ENCODE measurements at regions of chr3 and their contacts with region 1.

Region 1: GRCh38 chr3:66822186-66823008 is 175.7 kb upstream of the KBTBD8 start:
- DNase-seq: peak; percentile 42
- H3K4me3 ChIP-seq: no peak overlapping the region
- H3K27ac ChIP-seq: no peak overlapping the region
- H3K27me3 ChIP-seq: peaks cover 2% of the 10 kb centered on the region
- CTCF ChIP-seq: peak; percentile 84

Region 2: DNA sequence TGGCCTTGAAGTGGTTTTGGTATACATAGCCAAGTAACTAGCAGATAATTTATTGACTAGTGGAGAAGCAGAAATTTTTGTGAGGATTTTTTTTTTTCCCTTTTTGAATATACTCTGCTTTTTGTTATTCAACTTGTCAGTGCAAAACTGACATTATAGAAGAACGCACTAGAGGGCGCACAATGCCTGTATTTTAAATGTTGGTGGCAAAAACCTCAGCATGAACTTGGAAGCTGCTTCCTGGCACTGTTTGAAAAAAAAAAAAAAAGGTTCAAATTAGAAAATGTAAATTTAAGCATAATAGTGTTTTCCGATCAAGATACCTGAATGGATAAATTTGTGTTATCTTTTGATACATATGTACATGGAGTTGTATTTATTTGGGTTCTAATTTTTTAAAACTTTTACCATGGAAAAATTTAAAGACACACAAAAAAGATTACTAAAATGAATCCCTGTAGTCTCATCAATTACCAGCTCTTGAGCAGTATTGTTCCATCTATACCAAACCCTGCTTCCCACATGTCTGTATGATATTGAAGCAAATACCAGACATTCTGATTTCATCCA is 545.6 kb before region 1 on chr3:
- CTCF ChIA-PET with region 1: interaction called, 46 read pairs
- POLR2A ChIA-PET with region 1: no interaction called
- DNase-seq: peak; percentile 65
- H3K4me3 ChIP-seq: no peak overlapping the region
- H3K27ac ChIP-seq: no peak overlapping the region
- H3K27me3 ChIP-seq: no peaks in the 10 kb centered on the region
- CTCF ChIP-seq: peak; percentile 66

Region 3: GRCh38 chr3:66490214-66490613 is 332.2 kb before region 1 on chr3:
- CTCF ChIA-PET with region 1: interaction called, 19 read pairs
- POLR2A ChIA-PET with region 1: no interaction called
- DNase-seq: peak; percentile 76
- H3K4me3 ChIP-seq: peak overlapping the region; percentile 35
- H3K27ac ChIP-seq: peak overlapping the region; percentile 58
- H3K27me3 ChIP-seq: no peaks in the 10 kb centered on the region
- CTCF ChIP-seq: no peak

Region 4: DNA sequence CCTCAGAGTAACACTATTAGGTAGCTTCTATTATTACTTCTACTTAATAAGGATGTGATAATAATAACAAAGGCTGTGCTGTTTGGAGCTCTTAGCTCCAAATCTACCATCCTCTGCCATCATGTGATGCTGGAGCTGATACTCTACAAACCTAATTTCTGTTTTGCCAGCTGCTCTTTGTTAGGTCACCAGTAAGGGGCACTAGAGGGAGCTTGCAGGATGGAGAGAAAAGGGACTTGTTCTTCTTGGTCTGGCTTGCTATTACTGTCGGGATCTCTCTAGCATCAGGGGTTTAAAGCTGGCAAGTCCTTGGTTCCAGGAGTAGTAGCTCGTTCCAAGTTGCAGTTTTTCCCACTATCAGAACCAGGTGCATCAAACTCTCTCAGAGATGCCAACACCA is 19.2 kb before region 1 on chr3:
- CTCF ChIA-PET with region 1: interaction called, 17 read pairs
- POLR2A ChIA-PET with region 1: no interaction called
- DNase-seq: no peak
- H3K4me3 ChIP-seq: no peak overlapping the region
- H3K27ac ChIP-seq: no peak overlapping the region
- H3K27me3 ChIP-seq: no peaks in the 10 kb centered on the region
- CTCF ChIP-seq: peak; percentile 43

Region 5: GRCh38 chr3:67737906-67738865 is 915.8 kb after region 1 on chr3:
- CTCF ChIA-PET with region 1: no interaction called
- POLR2A ChIA-PET with region 1: no interaction called
- DNase-seq: no peak
- H3K4me3 ChIP-seq: no peak overlapping the region
- H3K27ac ChIP-seq: no peak overlapping the region
- H3K27me3 ChIP-seq: no peaks in the 10 kb centered on the region
- CTCF ChIP-seq: no peak

Measured in AG04450 (cell line).